Naive thymus-derived CD4-positive, alpha-beta T cell (primary cell): ENCODE measurements at regions of chr1 and their contacts with region 1.

Region 1: DNA sequence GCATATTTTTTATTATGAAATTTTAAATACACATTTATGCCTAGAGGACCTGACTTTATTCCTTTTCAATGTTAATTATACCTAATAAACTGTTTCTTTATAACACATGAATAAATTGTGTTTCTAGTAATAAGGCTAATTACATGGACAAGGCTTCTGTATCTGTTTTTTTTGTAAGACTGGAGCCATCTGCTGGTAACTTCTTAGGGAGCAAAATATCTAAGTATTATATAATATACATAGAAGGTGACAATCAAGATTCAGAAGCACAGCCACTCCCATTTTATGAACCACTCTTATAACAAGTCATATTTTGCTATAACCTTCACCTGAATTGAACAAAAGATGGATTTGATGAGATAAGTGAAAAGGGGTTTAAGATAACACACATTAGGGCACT is 84.2 kb downstream of the LBR start:
- DNase-seq: peak in 3 of 9 donors; percentile 2 to 32 (median 8)
- ATAC-seq: no peak
- H3K4me3 ChIP-seq: no peak overlapping the region
- H3K4me3 Mint-ChIP-seq: no peak overlapping the region
- H3K27ac ChIP-seq: no peak overlapping the region
- H3K27ac Mint-ChIP-seq: no peak overlapping the region
- H3K4me1 ChIP-seq: no peaks in the 10 kb centered on the region
- H3K4me1 Mint-ChIP-seq: no peaks in the 10 kb centered on the region
- H3K27me3 ChIP-seq: no peaks in the 10 kb centered on the region
- H3K27me3 Mint-ChIP-seq: peaks cover 7 to 44% (median 29%) of the 10 kb centered on the region in 5 donors

Region 2: DNA sequence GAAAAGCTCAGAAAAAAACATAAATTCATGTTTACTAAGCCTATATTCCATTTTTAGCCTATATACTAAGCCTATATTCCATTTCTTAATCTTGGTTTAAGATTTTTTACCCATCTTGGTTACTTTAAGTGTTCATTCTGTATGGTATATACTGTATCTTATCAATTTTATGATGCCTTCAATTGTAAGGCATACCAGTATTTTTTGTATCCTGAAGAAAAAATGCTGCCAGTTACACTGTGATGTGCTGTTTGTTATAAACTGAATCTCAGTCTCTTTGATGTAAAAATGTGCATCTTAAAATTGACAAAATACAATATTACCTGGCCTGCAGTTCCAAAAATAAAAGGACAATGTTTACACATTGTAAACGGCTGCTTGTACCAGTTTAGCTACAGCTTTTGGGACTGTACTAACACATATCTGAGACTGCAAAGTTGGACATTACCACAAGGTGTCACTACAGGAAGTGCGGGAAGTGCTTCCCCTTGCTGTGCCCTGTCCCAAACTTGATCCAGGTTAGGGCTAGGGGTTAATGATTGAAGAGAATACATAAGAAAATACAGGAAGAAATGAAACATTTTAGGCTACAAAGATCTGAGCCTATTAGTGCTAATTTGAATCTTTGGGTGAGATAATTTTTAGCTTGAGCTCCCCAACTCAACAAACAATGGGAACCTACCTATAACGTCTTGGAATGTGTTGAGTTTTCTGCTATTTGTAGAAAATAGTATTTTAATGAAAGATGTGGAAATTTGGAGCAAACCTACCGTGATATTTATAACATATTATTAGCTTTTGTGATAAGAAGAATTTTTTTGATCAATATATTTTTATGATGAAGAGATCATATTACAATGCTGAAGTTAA is 24.7 kb before region 1 on chr1:
- CTCF ChIA-PET with region 1: interaction called, 3 read pairs
- POLR2A ChIA-PET with region 1: no interaction called
- intact Hi-C with region 1: loop called in 1 of 2 experiments (anchors 2 kb)
- DNase-seq: peak in 5 of 9 donors; percentile 2 to 28 (median 12)
- ATAC-seq: peak; percentile 65
- H3K4me3 ChIP-seq: no peak overlapping the region
- H3K4me3 Mint-ChIP-seq: no peak overlapping the region
- H3K27ac ChIP-seq: no peak overlapping the region
- H3K27ac Mint-ChIP-seq: no peak overlapping the region
- H3K4me1 ChIP-seq: no peaks in the 10 kb centered on the region
- H3K4me1 Mint-ChIP-seq: peaks cover 0 to 4% (median 0%) of the 10 kb centered on the region in 7 donors
- H3K27me3 ChIP-seq: no peaks in the 10 kb centered on the region
- H3K27me3 Mint-ChIP-seq: peaks cover 0 to 10% (median 5%) of the 10 kb centered on the region in 5 donors